ENCODE measurements at regions of chr2 and their contacts with region 1.

Region 1: GRCh38 chr2:70142590-70143313 is 48.1 kb downstream of the C2orf42 start:
- DNase-seq: peak; percentile 98
- ATAC-seq: peak; percentile 74
- H3K4me3 ChIP-seq: peak overlapping the region; percentile 40 to 63
- H3K27ac ChIP-seq: peak overlapping the region; percentile 99
- H3K4me1 ChIP-seq: peaks cover 35 to 51% of the 10 kb centered on the region in 2 experiments
- H3K27me3 ChIP-seq: no peaks in the 10 kb centered on the region
- CTCF ChIP-seq: peak in 2 of 3 experiments; percentile 83 to 88; a peak in 4 of 6 replicates
- POLR2A ChIP-seq: peak; percentile 31
- RAD21 ChIP-seq: no peak

Region 2: GRCh38 chr2:69848201-69848770 is 294.5 kb before region 1 on chr2:
- CTCF ChIA-PET with region 1: no interaction called
- POLR2A ChIA-PET with region 1: no interaction called
- RAD21 ChIA-PET with region 1: no interaction called
- intact Hi-C with region 1: no loop called
- DNase-seq: no peak
- ATAC-seq: no peak
- H3K4me3 ChIP-seq: no peak overlapping the region
- H3K27ac ChIP-seq: no peak overlapping the region
- H3K4me1 ChIP-seq: 0 out of 4 replicates have a peak, but pooled peaks cover 0 to 5% of the 10 kb centered on the region in 2 experiments
- H3K27me3 ChIP-seq: no peaks in the 10 kb centered on the region
- CTCF ChIP-seq: no peak
- POLR2A ChIP-seq: no peak
- RAD21 ChIP-seq: no peak

Region 3: GRCh38 chr2:70104231-70105111 is 38.3 kb before region 1 on chr2:
- CTCF ChIA-PET with region 1: no interaction called
- POLR2A ChIA-PET with region 1: interaction called, 6 read pairs
- RAD21 ChIA-PET with region 1: no interaction called
- intact Hi-C with region 1: loop called (anchors 2 kb)
- DNase-seq: no peak
- ATAC-seq: no peak
- H3K4me3 ChIP-seq: peak overlapping the region in 1 of 2 experiments; percentile 8; a peak in 1 of 4 replicates
- H3K27ac ChIP-seq: peak overlapping the region; percentile 61
- H3K4me1 ChIP-seq: peaks cover 39 to 58% of the 10 kb centered on the region in 2 experiments
- H3K27me3 ChIP-seq: no peaks in the 10 kb centered on the region
- CTCF ChIP-seq: no peak
- POLR2A ChIP-seq: no peak
- RAD21 ChIP-seq: no peak; the same call in 1 of the 2 replicates

Region 4: DNA sequence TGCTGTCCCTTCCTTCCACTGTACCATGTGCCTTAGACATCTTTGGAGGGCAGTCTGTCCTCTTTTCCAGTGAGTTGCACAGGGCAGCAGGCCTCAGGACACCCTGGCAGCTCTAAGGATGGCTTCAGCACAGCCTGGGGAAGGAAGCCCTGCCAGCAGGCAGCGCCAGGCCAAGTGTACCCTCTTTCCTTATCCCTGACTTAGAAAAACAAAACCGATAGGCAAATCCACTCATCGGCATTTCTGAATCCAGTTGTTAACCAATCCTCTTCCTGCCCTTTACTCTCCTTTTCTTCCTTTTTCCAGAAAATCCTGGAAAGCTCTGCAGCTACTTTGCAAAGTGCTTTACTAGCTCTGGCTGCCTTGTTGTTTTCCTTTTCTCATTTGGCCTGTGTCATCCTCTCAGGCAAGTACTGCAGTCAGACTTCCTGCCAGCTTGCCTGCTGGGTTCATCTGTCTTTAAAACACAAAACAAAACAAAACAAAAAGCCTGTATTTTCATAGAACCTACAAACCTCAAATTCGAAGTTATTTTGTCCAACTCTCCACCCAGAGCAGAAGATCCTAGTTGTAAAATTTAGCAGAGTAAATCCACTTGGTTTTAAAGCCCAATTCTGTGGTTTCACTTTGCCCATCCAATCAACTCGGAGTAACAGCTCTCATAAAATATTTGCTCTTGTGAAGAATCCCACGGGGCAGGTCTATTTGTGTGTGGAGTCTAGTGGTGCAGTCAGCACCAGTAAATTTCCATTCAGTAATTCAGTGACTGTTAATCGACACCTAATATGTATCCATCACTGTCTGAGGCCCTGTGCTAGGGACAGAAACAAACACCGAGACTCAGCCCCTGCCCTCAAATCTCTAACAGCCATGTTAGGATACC is 10.3 kb before region 1 on chr2:
- CTCF ChIA-PET with region 1: interaction called, 3 read pairs
- POLR2A ChIA-PET with region 1: interaction called, 12 read pairs
- RAD21 ChIA-PET with region 1: no interaction called
- intact Hi-C with region 1: no loop called
- DNase-seq: no peak
- ATAC-seq: 0 out of 2 replicates have a peak, but pooled peaks have one; percentile 21
- H3K4me3 ChIP-seq: peak overlapping the region in 1 of 2 experiments; percentile 16; a peak in 1 of 4 replicates
- H3K27ac ChIP-seq: peak overlapping the region; percentile 58
- H3K4me1 ChIP-seq: peaks cover 57 to 59% of the 10 kb centered on the region in 2 experiments
- H3K27me3 ChIP-seq: no peaks in the 10 kb centered on the region
- CTCF ChIP-seq: no peak
- POLR2A ChIP-seq: no peak
- RAD21 ChIP-seq: no peak

Region 5: DNA sequence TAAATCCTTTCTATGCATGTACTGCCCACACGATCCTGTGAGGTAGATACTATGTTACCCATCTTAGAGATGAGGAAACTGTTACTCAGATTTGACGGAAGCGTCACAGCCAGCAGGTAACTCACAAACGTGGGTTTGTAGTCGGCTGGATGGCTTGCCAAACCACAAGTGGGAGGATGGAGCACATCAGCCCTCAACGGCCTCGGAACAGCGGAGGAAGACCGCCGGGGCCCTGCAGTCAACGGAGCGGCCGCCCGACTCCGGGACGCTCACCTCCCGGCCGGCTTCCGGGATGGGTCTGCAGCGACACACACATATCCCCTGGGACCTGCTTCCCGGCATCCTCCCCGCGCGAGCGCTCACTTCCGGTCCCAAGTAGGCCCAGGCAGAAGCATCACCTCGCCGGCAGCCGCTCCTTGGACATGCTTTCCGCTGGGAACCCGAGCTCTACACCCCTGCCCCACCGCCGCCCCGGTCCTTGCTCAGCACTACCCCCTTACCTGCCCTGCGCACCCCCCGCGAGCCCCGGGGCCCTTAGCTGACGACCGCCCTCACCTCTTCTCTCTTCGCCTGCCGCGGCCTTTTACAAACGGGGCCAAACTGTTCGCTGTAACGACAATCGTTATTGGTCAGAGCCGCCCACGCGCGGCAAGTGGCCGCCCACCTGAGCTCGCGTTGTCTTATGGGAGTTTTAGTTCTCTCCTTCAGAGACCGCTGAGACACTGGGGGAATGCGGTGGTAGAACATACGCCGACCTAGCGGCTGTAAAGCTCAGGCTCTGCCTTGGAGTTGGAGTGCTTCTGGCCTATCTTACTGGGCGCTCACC is 47.9 kb after region 1 on chr2 and contains the start of gene C2orf42:
- CTCF ChIA-PET with region 1: no interaction called
- POLR2A ChIA-PET with region 1: interaction called, 3 read pairs
- RAD21 ChIA-PET with region 1: interaction called in 1 of 2 experiments, 3 read pairs
- intact Hi-C with region 1: loop called (anchors 1 kb)
- DNase-seq: peak; percentile 97
- ATAC-seq: peak; percentile 91
- H3K4me3 ChIP-seq: peak within 1 kb of the TSS; percentile 79 to 87
- H3K27ac ChIP-seq: peak within 1 kb of the TSS; percentile 86
- H3K4me1 ChIP-seq: peaks cover 7 to 14% of the 10 kb centered on the region in 2 experiments; a peak in 3 of 4 replicates
- H3K27me3 ChIP-seq: no peaks in the 10 kb centered on the region
- CTCF ChIP-seq: no peak
- POLR2A ChIP-seq: peak; percentile 94
- RAD21 ChIP-seq: peak; percentile 10; the same call in 1 of the 2 replicates
- total RNA-seq, gene C2orf42: 17.4 TPM

Measured in HCT116 (cell line).